ENCODE measurements at regions of chr11 and their contacts with region 1.

Region 1: DNA sequence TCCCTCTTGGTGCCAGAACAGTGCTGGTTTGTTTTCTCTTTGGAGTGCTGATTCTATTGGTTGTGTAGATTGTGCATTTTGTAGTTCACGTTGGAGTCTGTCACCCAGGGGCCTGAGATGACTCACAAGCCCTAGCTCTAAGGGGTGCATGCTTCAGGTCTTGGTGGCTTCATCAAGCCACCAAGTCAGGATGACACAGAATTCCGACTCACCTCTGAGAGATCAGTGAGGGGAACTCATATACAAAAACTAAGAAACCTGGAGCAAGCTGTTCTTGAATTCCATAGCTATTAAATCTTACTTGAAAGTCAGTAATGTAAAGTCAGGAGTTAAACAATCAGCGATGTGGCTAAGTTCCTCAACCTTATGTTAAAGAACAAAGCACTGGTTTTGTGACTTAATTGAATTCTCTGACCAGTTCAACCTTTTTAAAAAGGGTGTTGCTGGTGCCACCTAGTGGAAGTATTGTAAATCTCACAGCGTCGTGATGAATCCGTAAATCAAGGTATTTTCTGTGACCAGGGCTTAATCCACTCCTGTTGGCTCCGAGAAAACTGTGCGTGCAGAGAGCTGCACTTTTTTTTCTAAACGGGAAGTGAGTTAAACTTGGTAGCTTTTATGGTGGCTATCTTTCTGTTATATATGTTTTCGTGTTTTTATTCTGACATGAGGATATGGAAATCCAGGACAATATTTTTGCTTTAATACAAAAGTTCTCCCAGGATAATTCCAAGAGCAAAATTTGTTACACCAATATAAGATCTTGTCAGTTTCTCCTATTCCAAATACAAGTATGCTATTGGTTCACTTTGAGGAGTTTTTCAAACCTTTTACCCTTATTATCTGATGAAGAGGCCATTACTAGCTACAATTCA is 14.6 kb downstream of the MMP13 start:
- DNase-seq: peak; percentile 29
- H3K4me3 ChIP-seq: no peak overlapping the region
- H3K27ac ChIP-seq: no peak overlapping the region
- H3K27me3 ChIP-seq: no peaks in the 10 kb centered on the region
- CTCF ChIP-seq: peak; percentile 78

Region 2: GRCh38 chr11:102733232-102733875 is 207.6 kb before region 1 on chr11:
- CTCF ChIA-PET with region 1: interaction called, 18 read pairs
- POLR2A ChIA-PET with region 1: no interaction called
- DNase-seq: no peak
- H3K4me3 ChIP-seq: no peak overlapping the region
- H3K27ac ChIP-seq: no peak overlapping the region
- H3K27me3 ChIP-seq: peaks cover 2% of the 10 kb centered on the region
- CTCF ChIP-seq: peak; percentile 81

Region 3: GRCh38 chr11:102810945-102811660 is 129.8 kb before region 1 on chr11:
- CTCF ChIA-PET with region 1: interaction called, 30 read pairs
- POLR2A ChIA-PET with region 1: no interaction called
- DNase-seq: no peak
- H3K4me3 ChIP-seq: no peak overlapping the region
- H3K27ac ChIP-seq: no peak overlapping the region
- H3K27me3 ChIP-seq: no peaks in the 10 kb centered on the region
- CTCF ChIP-seq: peak; percentile 71

Region 4: DNA sequence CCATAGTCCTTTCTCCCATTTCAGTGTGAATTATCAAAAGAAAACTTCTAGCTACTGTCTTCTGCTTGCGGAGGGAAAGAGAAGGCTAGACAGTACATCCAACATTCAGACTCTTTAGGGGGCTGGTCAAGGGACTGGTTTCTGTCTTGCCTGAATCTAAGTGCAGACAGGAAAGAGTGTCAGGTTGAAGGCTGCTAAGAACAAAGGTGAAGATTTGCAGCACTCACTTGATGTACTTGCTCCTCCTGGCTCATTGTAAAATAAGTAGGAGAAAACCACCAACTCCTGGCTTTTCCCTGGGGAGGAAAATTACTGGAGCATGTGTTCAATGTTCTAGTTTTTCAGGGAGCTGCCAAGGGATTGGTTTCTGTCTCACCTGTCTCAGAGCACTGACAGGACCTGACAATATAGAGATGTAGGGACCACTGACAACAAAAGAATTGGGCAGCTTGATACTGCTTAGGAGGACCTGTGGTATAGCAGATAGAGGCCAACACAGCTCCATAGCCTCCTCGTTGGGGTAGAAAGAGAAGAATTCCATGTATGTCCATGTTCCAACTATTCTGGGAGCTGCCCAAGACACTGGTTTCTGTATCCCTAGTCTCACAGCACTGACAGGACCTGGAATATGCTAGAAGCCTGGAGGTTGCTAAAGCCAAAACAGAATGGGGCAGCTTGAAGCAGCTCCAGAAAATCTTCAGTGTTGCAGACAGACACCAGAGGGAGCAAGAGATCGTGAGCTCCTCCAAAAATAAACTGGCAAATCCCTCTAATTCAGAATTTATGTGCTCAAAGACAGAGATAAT is 26.5 kb before region 1 on chr11:
- CTCF ChIA-PET with region 1: interaction called, 62 read pairs
- POLR2A ChIA-PET with region 1: no interaction called
- DNase-seq: peak; percentile 15
- H3K4me3 ChIP-seq: no peak overlapping the region
- H3K27ac ChIP-seq: no peak overlapping the region
- H3K27me3 ChIP-seq: no peaks in the 10 kb centered on the region
- CTCF ChIP-seq: peak; percentile 85

Region 5: GRCh38 chr11:102929972-102930371 is 11.0 kb before region 1 on chr11:
- CTCF ChIA-PET with region 1: interaction called, 37 read pairs
- POLR2A ChIA-PET with region 1: no interaction called
- DNase-seq: no peak
- H3K4me3 ChIP-seq: no peak overlapping the region
- H3K27ac ChIP-seq: no peak overlapping the region
- H3K27me3 ChIP-seq: peaks cover 8% of the 10 kb centered on the region
- CTCF ChIP-seq: no peak

Region 6: GRCh38 chr11:103024086-103024485 is 83.1 kb after region 1 on chr11:
- CTCF ChIA-PET with region 1: interaction called, 10 read pairs
- POLR2A ChIA-PET with region 1: no interaction called
- DNase-seq: no peak
- H3K4me3 ChIP-seq: no peak overlapping the region
- H3K27ac ChIP-seq: no peak overlapping the region
- H3K27me3 ChIP-seq: no peaks in the 10 kb centered on the region
- CTCF ChIP-seq: no peak

Region 7: GRCh38 chr11:103043826-103044624 is 103.1 kb after region 1 on chr11:
- CTCF ChIA-PET with region 1: no interaction called
- POLR2A ChIA-PET with region 1: no interaction called
- DNase-seq: no peak
- H3K4me3 ChIP-seq: no peak overlapping the region
- H3K27ac ChIP-seq: no peak overlapping the region
- H3K27me3 ChIP-seq: no peaks in the 10 kb centered on the region
- CTCF ChIP-seq: no peak

Region 8: GRCh38 chr11:103257360-103257759 is 316.4 kb after region 1 on chr11:
- CTCF ChIA-PET with region 1: no interaction called
- POLR2A ChIA-PET with region 1: no interaction called
- DNase-seq: no peak
- H3K4me3 ChIP-seq: no peak overlapping the region
- H3K27ac ChIP-seq: no peak overlapping the region
- H3K27me3 ChIP-seq: no peaks in the 10 kb centered on the region
- CTCF ChIP-seq: peak; percentile 59